Left ventricle myocardium inferior (tissue), 1 donor: ENCODE measurements at regions of chr13 and their contacts with region 1.

Region 1: GRCh38 chr13:52128714-52129700 is at the start of gene NEK5:
- DNase-seq: peak; percentile 58
- H3K4me3 ChIP-seq: peak within 1 kb of the TSS; percentile 82
- H3K27ac ChIP-seq: peak within 1 kb of the TSS; percentile 4
- H3K4me1 ChIP-seq: peaks cover 21% of the 10 kb centered on the region
- H3K27me3 ChIP-seq: no peaks in the 10 kb centered on the region
- CTCF ChIP-seq: peak; percentile 85
- total RNA-seq, gene NEK5: 0.25 TPM

Region 2: DNA sequence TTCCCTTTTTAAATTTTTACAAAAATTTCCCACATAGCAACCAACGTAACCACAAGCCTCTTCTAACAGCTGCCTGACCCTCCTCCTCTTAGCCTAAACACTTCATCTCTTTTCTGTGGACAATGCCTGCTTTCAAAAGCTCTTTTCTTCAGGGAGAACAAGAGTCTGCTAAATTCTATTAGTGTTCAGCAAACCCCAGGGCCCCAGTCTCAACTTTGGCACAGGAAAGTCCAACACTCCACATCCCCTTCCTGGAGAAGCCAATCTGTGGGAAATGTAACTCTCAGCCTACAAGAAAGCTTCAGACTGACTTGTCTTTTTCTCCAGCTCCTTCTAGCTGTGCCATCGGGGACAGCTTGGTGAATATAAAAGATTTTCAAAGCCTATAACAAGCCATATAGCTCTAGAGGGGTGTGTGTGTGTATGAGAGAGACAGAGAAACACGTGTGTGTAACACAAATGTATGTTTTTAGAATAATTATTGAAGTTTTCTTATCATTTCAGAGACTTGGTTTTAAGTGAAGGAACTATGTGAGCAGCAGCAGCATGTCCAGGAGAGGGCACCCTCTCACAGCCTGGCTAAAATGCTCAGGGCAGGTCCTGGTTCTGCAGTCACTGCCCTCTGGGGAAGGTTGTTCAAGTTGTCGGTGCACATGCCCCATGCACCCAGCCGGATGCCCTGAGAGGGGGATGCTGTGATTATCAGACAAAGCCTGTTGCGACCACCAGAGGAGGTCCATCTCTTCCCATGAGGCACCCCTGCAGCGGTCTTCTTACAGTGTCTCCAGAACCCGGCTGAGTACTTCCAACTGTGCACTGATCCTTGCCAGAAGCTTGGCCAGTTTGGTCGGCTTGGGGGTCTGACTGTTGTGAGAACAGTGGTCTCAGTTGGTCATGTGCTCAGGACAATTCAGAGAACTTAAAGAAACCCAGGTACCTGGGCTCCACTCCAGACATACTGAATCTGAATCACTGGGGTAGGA is 232.8 kb before region 1 on chr13:
- intact Hi-C with region 1: loop called (anchors 5 kb)
- DNase-seq: peak; percentile 30
- H3K4me3 ChIP-seq: no peak overlapping the region
- H3K27ac ChIP-seq: no peak overlapping the region
- H3K4me1 ChIP-seq: no peaks in the 10 kb centered on the region
- H3K27me3 ChIP-seq: no peaks in the 10 kb centered on the region
- CTCF ChIP-seq: peak; percentile 79

Region 3: DNA sequence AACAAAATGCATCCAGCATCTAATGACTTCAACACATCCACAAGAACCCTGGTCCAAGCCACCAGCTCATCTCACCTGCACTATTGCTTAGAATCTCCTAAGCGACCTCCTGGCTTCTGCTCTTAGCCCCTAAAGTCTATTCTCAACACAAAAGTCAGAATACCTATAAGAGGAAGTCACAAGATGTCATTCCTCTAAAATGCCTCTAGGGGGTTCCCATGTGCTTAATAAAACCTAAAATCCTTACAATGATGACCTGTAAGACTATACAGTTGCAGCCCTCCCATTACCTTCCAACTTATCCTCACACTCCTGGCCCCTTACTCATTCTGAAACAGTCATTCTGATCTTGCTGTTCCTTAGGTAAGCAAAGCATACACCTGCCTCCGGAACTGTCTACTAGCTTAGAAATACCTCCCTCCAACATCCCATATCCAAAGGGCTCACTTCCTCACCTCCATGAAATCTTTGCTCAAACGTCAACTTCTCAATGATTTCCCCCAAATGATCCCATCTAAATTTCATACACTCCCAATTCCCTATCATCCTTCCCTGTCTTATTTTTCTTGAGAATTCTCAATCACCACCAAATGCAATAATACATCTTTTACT is 127.8 kb before region 1 on chr13:
- intact Hi-C with region 1: loop called (anchors 5 kb)
- DNase-seq: no peak
- H3K4me3 ChIP-seq: no peak overlapping the region
- H3K27ac ChIP-seq: no peak overlapping the region
- H3K4me1 ChIP-seq: peaks cover 24% of the 10 kb centered on the region
- H3K27me3 ChIP-seq: no peaks in the 10 kb centered on the region
- CTCF ChIP-seq: peak; percentile 76

Region 4: GRCh38 chr13:52034616-52035226 is 94.3 kb before region 1 on chr13:
- intact Hi-C with region 1: no loop called
- DNase-seq: no peak
- H3K4me3 ChIP-seq: no peak overlapping the region
- H3K27ac ChIP-seq: no peak overlapping the region
- H3K4me1 ChIP-seq: no peaks in the 10 kb centered on the region
- H3K27me3 ChIP-seq: no peaks in the 10 kb centered on the region
- CTCF ChIP-seq: no peak

Region 5: DNA sequence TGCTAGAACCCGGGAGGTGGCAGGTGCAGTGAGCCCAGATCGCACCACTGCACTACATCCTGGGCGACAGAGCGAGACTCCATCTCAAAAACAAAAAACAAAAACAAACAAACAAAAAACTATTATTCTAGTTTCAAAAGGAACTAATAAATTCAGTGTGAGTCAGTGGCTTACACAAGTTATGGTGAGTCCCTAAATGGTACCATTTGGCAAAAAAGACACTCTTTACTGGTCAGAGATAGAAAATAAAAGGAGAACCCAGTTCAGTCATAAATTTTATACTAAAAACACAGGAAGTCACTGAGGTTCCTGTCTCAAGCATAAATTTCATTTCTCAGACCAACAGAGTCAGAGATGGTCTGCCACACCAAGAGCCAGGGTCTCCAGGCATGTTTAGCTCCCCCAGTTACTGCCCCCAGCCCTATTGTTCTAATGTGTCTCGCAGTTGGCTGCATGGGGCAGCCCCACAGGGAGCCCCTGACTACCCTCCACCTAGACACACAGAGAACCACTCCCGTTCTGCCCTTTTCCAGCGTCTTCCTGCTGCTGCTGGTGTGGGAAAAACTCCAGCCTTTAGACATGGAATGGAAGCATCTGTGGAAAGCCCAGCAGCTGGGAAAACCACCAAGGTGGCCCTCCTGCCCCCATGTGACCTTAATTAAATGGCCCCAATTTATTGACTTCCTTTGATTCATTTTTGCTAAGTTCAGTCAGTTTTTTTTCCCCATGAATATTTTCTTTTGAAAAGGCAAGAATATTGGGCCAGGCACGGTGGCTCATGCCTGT is 264.8 kb after region 1 on chr13:
- intact Hi-C with region 1: no loop called
- DNase-seq: no peak
- H3K4me3 ChIP-seq: no peak overlapping the region
- H3K27ac ChIP-seq: no peak overlapping the region
- H3K4me1 ChIP-seq: peaks cover 56% of the 10 kb centered on the region
- H3K27me3 ChIP-seq: no peaks in the 10 kb centered on the region
- CTCF ChIP-seq: no peak